Sigmoid colon (tissue), 7 donors: ENCODE measurements at regions of chr2 and their contacts with region 1.

Region 1: DNA sequence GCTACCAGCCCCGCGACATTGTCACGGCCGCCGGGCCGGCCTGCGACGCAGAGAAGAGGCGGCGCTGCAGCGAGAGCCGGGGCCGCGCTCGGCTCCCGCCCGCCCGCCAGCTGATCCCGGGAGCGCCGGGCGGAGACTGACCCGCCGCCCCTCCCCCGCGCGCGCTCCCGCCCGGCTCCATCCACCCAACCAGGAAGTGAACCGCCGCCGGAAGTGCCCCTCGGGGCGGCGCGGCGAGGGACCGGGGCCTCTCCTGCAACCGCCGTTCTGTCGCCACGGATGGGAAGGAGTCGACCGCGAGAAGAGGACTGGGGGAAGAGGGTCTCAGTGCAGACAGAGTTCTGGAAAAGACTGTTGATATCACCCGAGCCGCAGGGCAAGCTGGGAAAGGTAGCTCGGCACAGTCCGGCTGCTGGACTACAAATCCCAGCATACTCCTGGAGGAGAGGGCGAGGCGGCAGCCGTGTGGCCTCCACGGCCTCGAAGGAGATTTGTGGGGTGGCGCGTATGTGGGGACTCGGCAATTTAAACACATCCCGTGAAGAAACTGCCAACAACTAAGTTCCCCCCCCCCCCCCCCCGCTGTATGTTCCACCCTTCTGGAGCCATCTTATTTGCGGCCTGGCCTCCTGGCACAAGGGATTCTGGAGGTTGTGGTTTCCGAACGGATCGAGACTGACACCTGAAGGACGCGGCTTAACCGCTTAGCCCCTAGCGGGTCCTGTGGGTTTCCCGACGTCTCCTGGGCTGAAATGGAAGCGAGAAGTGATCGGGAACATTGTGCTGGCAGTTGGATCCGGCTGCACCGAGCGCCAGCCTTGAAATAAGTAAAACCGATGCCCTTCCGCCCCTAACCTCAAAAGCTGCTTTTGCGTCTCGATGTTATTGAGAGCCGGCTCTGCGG is at the start of gene AAK1:
- DNase-seq: peak; percentile 93
- H3K4me3 ChIP-seq: peak within 1 kb of the TSS; percentile 79 to 98 (median 84)
- H3K27ac ChIP-seq: peak within 1 kb of the TSS; percentile 91 to 97 (median 92)
- H3K4me1 ChIP-seq: peaks cover 0 to 49% (median 40%) of the 10 kb centered on the region in 4 donors
- H3K27me3 ChIP-seq: no peaks in the 10 kb centered on the region
- CTCF ChIP-seq: no peak
- EP300 ChIP-seq: no peak
- POLR2A ChIP-seq: peak; percentile 31 to 44
- total RNA-seq, gene AAK1: 20.7 to 35.7 (median 22.9) TPM

Region 2: DNA sequence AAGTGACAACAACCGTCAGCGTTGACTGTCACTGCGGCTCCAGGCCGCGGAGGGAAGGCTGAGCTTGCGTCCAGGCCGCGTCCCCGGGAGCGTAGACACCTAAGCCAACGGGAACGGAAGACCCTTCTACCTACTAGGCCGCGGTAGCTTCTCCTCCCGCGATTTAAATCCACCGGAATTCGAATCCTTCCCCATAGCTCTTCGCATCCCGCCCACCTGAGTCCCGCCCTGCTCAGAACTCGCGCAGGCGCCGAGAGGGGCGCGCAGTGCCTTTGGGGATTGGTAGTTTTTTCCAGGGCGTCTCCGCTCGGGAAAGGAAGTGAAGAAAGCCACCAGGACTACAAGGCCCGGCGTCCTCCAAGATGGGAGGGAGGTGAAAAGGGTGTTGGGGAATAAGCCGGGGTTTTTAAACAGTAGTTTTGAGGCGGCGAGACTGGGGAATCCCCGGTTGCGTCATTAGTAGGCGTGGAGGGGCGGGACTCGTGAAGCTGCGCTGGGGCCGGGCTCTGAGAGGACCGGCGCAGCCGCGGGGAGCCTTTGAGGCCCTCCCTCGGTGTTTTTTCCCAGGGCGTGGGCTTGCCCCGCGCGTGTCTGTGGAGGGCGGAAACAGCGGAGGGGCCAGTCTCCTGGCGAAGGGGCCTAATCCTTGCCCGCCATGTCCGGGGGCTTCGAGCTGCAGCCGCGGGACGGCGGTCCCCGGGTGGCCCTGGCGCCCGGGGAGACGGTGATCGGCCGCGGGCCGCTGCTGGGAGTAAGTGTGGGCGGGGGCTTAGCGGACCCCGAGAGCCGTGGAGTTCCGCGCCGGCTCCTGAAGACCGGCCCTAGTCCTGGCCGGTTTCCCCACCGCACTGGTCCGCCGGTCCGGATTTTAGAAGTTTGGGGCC is 1176.5 kb before region 1 on chr2 and contains the starts of genes APLF and FBXO48:
- intact Hi-C with region 1: loop called (anchors 10 kb)
- DNase-seq: peak; percentile 99
- H3K4me3 ChIP-seq: peak within 1 kb of the TSS; percentile 69 to 90 (median 88)
- H3K27ac ChIP-seq: peak within 1 kb of the TSS; percentile 83 to 93 (median 88)
- H3K4me1 ChIP-seq: peaks cover 0 to 25% (median 18%) of the 10 kb centered on the region in 4 donors
- H3K27me3 ChIP-seq: no peaks in the 10 kb centered on the region
- CTCF ChIP-seq: no peak
- EP300 ChIP-seq: peak in 1 of 4 donors; percentile 5
- POLR2A ChIP-seq: peak in 1 of 2 donors; percentile 9
- total RNA-seq, gene APLF: 11.0 to 21.7 (median 14.5) TPM
- total RNA-seq, gene FBXO48: 0.55 to 1.1 (median 0.83) TPM

Region 3: GRCh38 chr2:69386789-69387734 is 256.8 kb before region 1 on chr2 and contains the start of gene GFPT1:
- intact Hi-C with region 1: loop called (anchors 5 kb)
- DNase-seq: peak; percentile 96
- H3K4me3 ChIP-seq: peak within 1 kb of the TSS; percentile 78 to 99 (median 88)
- H3K27ac ChIP-seq: peak within 1 kb of the TSS; percentile 82 to 91 (median 88)
- H3K4me1 ChIP-seq: peaks cover 0 to 41% (median 21%) of the 10 kb centered on the region in 4 donors
- H3K27me3 ChIP-seq: no peaks in the 10 kb centered on the region
- CTCF ChIP-seq: no peak
- EP300 ChIP-seq: no peak
- POLR2A ChIP-seq: peak; percentile 16 to 28
- total RNA-seq, gene GFPT1: 14.5 to 24.4 (median 18.7) TPM

Region 4: GRCh38 chr2:69436938-69437750 is 206.7 kb before region 1 on chr2 and contains the start of gene NFU1:
- intact Hi-C with region 1: loop called (anchors 2 kb)
- DNase-seq: peak; percentile 98
- H3K4me3 ChIP-seq: peak within 1 kb of the TSS; percentile 77 to 92 (median 84)
- H3K27ac ChIP-seq: peak within 1 kb of the TSS; percentile 94 to 96 (median 94)
- H3K4me1 ChIP-seq: peaks cover 0 to 31% (median 22%) of the 10 kb centered on the region in 4 donors
- H3K27me3 ChIP-seq: no peaks in the 10 kb centered on the region
- CTCF ChIP-seq: peak; percentile 61 to 70 (median 65)
- EP300 ChIP-seq: peak in 1 of 4 donors; percentile 45
- POLR2A ChIP-seq: peak; percentile 54 to 71
- total RNA-seq, gene NFU1: 43.2 to 91.4 (median 74.2) TPM

Region 5: DNA sequence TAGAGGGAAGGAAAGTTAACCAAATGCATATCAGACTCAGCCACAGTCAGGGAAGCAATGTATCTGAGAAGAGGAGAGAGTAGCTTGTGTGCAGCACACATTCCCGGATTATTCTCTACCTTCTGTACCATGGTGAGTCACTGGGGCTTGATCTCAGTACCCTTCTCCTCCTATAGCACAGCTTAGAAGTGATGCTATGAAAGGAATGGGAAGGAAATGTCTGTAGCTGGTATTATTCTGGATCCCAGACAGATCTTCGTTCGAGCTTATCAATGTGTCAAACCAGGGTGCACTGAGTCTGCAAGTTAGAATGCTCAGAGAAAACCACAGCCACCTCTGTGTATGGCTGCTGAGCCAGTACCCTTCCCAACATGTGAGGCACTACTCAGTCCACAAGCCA is 118.6 kb before region 1 on chr2:
- intact Hi-C with region 1: no loop called
- DNase-seq: no peak
- H3K4me3 ChIP-seq: no peak overlapping the region
- H3K27ac ChIP-seq: no peak overlapping the region
- H3K4me1 ChIP-seq: no peaks in the 10 kb centered on the region
- H3K27me3 ChIP-seq: no peaks in the 10 kb centered on the region
- CTCF ChIP-seq: no peak
- EP300 ChIP-seq: no peak
- POLR2A ChIP-seq: no peak

Region 6: DNA sequence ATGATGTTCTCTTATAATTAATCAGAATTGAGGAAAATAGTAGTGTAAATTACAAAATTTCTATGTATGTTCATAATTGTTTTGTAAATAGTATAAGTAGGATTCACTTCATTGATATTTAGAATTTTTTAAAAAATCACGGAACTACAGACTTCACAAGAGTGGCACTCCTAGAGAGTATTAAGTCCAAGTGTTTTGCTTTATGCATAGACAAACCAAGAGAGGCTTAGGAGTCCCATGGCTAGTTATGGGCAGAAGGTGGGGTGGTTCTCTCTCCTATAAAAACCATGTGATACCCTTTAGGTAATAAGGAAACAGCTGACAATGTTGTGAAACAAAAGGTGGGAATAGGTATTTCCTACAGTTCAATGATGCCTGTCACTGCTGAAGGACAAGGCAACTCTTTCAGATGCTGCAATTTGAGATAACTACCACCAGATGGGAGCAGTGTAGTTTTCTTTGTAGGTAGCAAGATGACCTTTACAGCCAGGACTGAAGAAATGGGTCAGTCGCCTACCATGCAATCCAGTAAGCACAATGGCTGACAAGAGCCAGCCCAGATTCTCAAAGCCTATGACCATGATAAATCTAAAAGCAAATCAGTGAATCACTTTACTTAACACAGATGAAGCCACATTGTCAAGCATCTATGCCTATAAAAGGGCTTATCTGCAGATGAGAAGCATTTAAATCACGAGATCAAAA is 84.3 kb before region 1 on chr2:
- intact Hi-C with region 1: loop called (anchors 5 kb)
- DNase-seq: no peak
- H3K4me3 ChIP-seq: no peak overlapping the region
- H3K27ac ChIP-seq: no peak overlapping the region
- H3K4me1 ChIP-seq: peaks cover 0 to 22% (median 11%) of the 10 kb centered on the region in 4 donors
- H3K27me3 ChIP-seq: no peaks in the 10 kb centered on the region
- CTCF ChIP-seq: peak; percentile 12 to 55 (median 42)
- EP300 ChIP-seq: no peak
- POLR2A ChIP-seq: no peak

Region 7: DNA sequence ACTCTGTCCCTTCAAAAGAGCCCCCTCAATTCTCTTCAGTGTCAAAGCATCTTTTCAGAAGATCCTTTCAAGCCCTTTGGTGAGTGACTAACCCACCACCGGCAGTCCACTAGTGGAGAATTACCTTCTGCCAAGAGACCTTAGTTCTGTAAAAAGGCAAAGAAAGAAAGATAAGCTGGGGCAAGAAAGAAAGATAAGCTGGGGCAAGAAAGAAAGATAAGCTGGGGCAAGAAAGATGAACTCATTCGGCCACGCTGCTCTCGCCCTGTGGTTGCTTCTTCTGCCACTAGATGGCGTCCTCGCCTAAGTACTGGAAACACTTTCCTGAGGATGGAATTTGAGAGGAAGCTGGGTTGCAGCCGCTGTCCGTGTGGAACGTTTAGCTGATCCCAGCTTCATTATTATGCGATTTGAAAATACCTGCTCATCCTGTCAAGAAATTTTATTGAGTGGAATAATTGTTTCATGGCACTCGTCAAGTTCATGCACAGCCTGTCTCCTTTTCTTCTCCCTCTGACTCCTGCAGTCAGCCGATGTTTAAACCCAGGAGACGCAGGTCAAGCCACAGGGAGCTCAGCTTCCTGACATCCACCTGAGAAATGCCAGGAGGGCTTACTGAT is 80.8 kb after region 1 on chr2:
- intact Hi-C with region 1: no loop called
- DNase-seq: peak; percentile 91
- H3K4me3 ChIP-seq: peak overlapping the region in 3 of 4 donors; percentile 16 to 25 (median 25)
- H3K27ac ChIP-seq: no peak overlapping the region
- H3K4me1 ChIP-seq: peaks cover 0 to 10% (median 4%) of the 10 kb centered on the region in 4 donors
- H3K27me3 ChIP-seq: no peaks in the 10 kb centered on the region
- CTCF ChIP-seq: peak; percentile 85 to 96 (median 95)
- EP300 ChIP-seq: no peak
- POLR2A ChIP-seq: no peak

Region 8: GRCh38 chr2:69781321-69782248 is 137.7 kb after region 1 on chr2:
- intact Hi-C with region 1: no loop called
- DNase-seq: no peak
- H3K4me3 ChIP-seq: no peak overlapping the region
- H3K27ac ChIP-seq: no peak overlapping the region
- H3K4me1 ChIP-seq: no peaks in the 10 kb centered on the region
- H3K27me3 ChIP-seq: no peaks in the 10 kb centered on the region
- CTCF ChIP-seq: no peak
- EP300 ChIP-seq: no peak
- POLR2A ChIP-seq: no peak

Region 9: GRCh38 chr2:69829256-69830046 is 185.6 kb after region 1 on chr2 and contains the start of gene GMCL1:
- intact Hi-C with region 1: loop called (anchors 5 kb)
- DNase-seq: peak; percentile 99
- H3K4me3 ChIP-seq: peak within 1 kb of the TSS; percentile 86 to 94 (median 88)
- H3K27ac ChIP-seq: peak within 1 kb of the TSS; percentile 90 to 95 (median 94)
- H3K4me1 ChIP-seq: peaks cover 0 to 31% (median 23%) of the 10 kb centered on the region in 4 donors
- H3K27me3 ChIP-seq: no peaks in the 10 kb centered on the region
- CTCF ChIP-seq: no peak
- EP300 ChIP-seq: peak in 1 of 4 donors; percentile 40
- POLR2A ChIP-seq: peak; percentile 62 to 68
- total RNA-seq, gene GMCL1: 10.5 to 15.3 (median 12.9) TPM